ENCODE measurements at regions of chr5 and their contacts with region 1.

Region 1: GRCh38 chr5:1344975-1345838 is at the start of gene CLPTM1L:
- DNase-seq: peak; percentile 96
- ATAC-seq: peak; percentile 96
- H3K4me3 Mint-ChIP-seq: peak within 1 kb of the TSS; percentile 88
- H3K27ac Mint-ChIP-seq: peak within 1 kb of the TSS; percentile 82
- H3K4me1 Mint-ChIP-seq: peaks cover 18% of the 10 kb centered on the region
- H3K27me3 Mint-ChIP-seq: no peaks in the 10 kb centered on the region
- total RNA-seq, gene CLPTM1L: 80.9 to 82.7 TPM

Region 2: DNA sequence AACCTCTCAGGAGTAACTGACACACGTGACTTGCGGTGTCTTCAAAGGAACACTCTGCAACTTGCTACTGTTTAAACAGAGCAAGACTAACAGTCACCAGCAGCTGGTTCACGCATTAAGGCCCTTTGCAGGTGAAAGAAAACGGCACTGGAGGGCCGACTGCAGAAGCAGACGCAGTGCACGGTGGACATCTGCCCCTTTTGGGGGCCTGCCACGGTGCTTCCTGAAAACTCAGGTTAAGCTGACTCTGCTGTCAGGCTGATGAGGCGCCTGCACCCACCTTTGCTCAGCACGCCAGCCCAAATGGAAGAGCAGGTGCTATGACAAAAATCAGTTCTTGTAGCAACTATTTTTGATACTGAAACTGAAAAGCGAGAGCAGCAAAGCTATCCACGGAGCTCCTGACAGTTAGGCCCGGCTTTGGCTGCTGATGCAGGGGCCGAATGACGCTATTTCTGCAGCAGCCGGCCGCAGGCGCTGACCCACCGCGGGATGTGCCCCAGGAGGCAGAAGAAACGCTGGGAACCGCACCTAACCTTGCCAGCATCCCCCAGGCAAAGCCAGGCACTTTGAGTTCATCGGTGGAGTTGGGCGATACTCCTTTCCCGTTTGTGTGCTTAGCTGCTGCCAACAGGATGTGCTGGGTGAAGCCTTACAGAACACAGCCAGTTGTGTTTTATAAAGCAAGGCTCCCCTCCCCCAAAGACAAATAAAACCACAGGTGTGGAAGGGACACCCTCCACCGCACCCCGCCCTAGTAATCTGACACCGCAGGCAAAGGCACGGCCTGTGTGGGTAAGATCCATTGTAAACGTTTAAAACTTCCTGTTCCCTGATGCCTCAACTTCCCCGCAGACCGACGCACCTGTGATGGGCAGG is 29.3 kb before region 1 on chr5:
- POLR2A ChIA-PET with region 1: interaction called, 14 read pairs
- DNase-seq: peak; percentile 58
- ATAC-seq: peak; percentile 62
- H3K4me3 Mint-ChIP-seq: peak overlapping the region; percentile 74
- H3K27ac Mint-ChIP-seq: peak overlapping the region; percentile 85
- H3K4me1 Mint-ChIP-seq: peaks cover 53% of the 10 kb centered on the region
- H3K27me3 Mint-ChIP-seq: peaks cover 8% of the 10 kb centered on the region

Measured in activated naive CD8-positive, alpha-beta T cell treated with anti-CD3 and anti-CD28 coated beads, Interleukin-2, amount 10 ng/mL, durations not matched to agents 7 days and 5 days (primary cell).